Ovary (tissue), 10 donors: ENCODE measurements at regions of chr2 and their contacts with region 1.

Region 1: DNA sequence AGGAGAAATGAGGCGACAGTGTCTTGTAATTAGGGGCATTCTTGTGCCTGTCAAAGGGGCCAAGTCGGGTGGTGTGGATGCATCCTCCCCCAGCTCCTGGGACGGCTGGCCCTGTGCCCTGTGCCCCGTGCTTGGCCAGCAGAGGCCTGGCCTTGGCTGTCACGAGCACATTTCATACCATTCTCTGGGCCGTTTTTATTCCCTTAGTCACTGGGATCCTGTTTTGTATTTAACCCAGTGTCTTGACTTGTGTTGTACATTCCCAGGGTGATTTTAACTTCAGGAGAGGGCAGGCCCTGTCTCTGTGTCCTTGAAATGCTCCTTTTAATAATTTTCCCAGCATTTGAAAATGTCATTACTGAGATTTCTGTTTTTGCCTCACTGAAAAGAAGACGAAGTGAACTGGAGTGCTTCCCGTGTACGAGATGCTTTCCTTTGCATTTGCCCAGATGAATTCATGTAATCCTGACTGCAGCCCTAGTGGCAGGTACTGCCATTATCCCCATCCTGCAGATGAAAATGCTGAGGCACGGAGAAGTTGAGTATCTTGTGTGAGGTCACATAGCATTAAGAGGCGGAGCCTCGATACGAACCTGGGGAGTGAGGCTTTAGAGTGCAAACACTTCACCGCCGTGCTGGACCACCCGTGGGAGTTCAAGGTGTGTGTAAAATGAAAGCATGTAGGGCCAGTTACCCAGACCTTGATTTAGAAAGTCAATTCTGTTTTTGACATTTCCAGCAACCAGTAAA is 57.0 kb downstream of the SH3RF3 start:
- DNase-seq: peak; percentile 55 to 77 (median 66)
- H3K4me3 ChIP-seq: no peak overlapping the region
- H3K27ac ChIP-seq: peak overlapping the region in 1 of 2 donors; percentile 42
- H3K4me1 ChIP-seq: peaks cover 12% of the 10 kb centered on the region
- H3K27me3 ChIP-seq: no peaks in the 10 kb centered on the region
- CTCF ChIP-seq: no peak
- EP300 ChIP-seq: no peak
- POLR2A ChIP-seq: no peak

Region 2: DNA sequence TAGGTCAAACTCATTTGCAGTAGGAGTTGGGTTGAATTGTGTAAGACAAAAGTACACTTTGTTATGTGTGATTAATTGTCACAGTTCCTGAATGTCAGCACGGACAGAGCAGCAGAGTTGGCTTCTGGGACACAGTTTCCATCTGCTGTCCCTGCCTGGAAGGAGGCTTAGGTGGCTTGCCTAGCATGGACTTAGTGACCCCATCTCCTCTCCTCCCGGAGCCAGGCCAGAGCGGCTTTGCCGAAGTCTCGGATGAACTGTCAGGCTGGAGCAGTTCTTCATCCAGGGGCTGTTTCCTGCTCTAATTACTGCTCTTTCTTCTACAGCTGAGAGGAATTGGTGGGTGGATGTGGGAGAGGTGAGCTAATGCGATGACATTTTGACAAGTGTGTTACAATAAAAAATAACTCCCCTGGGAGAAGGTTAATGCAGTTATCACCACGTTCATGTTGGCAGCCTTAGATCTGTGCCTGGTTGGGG is 45.0 kb after region 1 on chr2:
- intact Hi-C with region 1: no loop called
- DNase-seq: no peak
- H3K4me3 ChIP-seq: no peak overlapping the region
- H3K27ac ChIP-seq: no peak overlapping the region
- H3K4me1 ChIP-seq: no peaks in the 10 kb centered on the region
- H3K27me3 ChIP-seq: no peaks in the 10 kb centered on the region
- CTCF ChIP-seq: no peak
- EP300 ChIP-seq: no peak
- POLR2A ChIP-seq: no peak

Region 3: GRCh38 chr2:109242654-109243331 is 56.8 kb after region 1 on chr2:
- intact Hi-C with region 1: loop called in 1 of 4 experiments (anchors 10 kb)
- DNase-seq: peak in 1 of 5 donors; percentile 65
- H3K4me3 ChIP-seq: no peak overlapping the region
- H3K27ac ChIP-seq: peak overlapping the region in 1 of 2 donors; percentile 51
- H3K4me1 ChIP-seq: peaks cover 22% of the 10 kb centered on the region
- H3K27me3 ChIP-seq: no peaks in the 10 kb centered on the region
- CTCF ChIP-seq: no peak
- EP300 ChIP-seq: no peak
- POLR2A ChIP-seq: no peak